ENCODE measurements at regions of chr11 and their contacts with region 1.

Region 1: DNA sequence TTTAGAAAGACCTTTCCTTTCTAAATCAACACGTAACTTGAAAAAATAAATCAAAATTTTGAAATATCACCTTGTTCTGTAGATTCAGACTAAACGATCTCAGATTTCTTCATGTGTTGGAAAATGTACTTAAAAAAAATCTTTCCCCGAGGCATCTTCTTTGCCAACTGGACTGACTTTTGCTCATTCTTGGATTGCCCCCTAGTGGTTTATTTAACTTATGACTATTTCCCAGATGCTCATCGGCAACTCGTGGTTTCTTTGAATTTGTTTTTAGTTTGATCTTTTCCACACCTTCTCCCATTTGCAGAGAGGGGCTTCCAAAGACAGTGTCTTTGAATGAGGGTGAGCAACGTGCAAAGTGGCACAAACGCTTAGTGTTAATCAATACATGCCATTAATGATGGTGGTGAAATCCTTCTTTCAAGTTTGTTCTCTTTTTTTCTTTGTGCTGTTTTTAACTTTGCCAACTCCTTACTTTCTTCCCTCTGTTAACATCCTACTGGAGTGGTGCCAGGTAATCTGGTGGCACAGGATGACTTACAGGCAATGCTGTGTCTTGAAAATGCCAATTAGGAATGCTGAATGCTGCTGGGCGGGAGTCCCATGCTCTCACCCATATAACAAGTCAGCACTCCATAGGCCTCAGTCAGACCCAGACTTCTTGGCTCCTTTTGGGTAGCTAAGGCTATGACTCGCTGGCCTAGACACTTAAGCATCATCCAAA is 18.3 kb downstream of the PRSS23 start:
- ATAC-seq: peak in 7 of 8 experiments; percentile 44 to 77 (median 55)
- H3K4me3 ChIP-seq: no peak overlapping the region
- H3K27ac ChIP-seq: no peak overlapping the region
- H3K4me1 ChIP-seq: no peaks in the 10 kb centered on the region

Region 2: GRCh38 chr11:85444479-85444878 is 1374.2 kb before region 1 on chr11:
- in situ Hi-C with region 1: no loop called
- ATAC-seq: no peak
- H3K4me3 ChIP-seq: no peak overlapping the region
- H3K27ac ChIP-seq: no peak overlapping the region
- H3K4me1 ChIP-seq: no peaks in the 10 kb centered on the region

Region 3: DNA sequence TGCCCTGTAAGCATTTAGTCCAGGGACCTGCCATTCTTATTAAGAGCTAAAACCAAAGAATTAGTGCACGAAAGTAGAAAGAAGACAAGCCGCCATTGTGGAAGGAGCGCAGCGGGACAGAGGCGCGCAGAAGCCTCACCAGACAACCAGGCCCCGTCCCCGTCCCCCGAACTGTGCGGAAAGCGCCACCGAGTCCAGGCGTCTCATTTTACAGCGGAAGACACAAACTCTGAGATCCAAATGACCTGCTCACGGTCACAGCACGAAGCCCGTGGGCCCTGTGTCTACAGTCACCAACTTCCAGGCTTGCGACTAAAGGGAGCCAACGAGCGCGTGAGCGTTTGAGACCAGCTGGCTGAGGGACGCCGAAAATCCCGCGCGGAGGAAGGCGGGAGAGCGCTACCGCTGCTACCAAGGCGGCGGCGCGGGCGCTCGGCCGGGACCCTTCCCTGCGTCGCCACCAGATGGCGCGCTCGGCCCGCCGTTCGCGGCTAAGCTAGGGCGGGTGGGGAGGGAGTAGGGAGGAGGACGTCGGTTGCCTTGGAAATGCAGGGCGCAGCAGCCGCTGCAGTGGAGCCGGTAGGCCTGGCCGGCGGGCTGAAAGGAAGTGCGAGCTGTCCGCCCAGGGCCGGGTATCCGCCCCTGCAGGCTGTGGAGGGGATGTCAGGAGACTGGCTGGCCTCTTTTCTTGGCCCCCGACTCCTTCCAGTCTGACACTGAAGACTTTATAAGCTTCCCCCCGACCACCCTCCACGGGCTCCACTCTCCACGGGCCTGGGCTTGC is 963.9 kb before region 1 on chr11:
- in situ Hi-C with region 1: loop called in 1 of 9 experiments (anchors 25 kb)
- ATAC-seq: peak; percentile 98 to 99 (median 98)
- H3K4me3 ChIP-seq: peak overlapping the region; percentile 35 to 44 (median 40)
- H3K27ac ChIP-seq: peak overlapping the region in 1 of 2 donors; percentile 35
- H3K4me1 ChIP-seq: peaks cover 2% of the 10 kb centered on the region in 2 donors

Region 4: DNA sequence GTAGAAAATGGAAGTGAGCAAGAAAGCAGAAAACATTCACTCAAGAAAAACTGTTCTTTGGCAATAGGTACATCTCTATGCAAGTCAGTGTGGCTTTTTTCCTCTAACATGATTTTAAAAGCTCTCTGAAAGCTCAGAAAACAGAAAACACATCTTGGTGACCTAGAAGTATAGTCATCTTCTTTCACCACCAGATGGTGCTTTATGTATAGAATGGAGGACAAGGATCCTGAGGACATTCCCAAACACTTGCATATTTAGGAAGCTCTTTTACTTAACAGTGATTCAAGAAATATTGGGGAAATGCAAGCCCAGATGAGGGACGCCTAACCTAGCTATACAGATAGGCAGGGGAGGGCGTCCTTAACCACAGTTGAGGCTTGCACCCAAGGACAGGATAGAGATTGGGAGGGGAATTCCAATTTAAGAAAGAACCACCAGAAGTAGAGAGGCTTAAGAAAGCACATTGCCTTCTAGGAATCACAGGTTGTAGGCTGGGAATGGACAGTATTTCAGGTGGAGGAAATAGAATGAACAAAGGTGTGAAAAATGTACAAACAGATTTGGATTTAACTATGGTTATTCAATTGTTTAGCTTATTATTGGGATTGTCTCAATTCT is 457.7 kb before region 1 on chr11:
- in situ Hi-C with region 1: loop called in 1 of 9 experiments (anchors 25 kb)
- ATAC-seq: peak in 4 of 8 experiments; percentile 28 to 89 (median 76)
- H3K4me3 ChIP-seq: no peak overlapping the region
- H3K27ac ChIP-seq: no peak overlapping the region
- H3K4me1 ChIP-seq: peaks cover 8 to 13% of the 10 kb centered on the region in 2 donors

Region 5: DNA sequence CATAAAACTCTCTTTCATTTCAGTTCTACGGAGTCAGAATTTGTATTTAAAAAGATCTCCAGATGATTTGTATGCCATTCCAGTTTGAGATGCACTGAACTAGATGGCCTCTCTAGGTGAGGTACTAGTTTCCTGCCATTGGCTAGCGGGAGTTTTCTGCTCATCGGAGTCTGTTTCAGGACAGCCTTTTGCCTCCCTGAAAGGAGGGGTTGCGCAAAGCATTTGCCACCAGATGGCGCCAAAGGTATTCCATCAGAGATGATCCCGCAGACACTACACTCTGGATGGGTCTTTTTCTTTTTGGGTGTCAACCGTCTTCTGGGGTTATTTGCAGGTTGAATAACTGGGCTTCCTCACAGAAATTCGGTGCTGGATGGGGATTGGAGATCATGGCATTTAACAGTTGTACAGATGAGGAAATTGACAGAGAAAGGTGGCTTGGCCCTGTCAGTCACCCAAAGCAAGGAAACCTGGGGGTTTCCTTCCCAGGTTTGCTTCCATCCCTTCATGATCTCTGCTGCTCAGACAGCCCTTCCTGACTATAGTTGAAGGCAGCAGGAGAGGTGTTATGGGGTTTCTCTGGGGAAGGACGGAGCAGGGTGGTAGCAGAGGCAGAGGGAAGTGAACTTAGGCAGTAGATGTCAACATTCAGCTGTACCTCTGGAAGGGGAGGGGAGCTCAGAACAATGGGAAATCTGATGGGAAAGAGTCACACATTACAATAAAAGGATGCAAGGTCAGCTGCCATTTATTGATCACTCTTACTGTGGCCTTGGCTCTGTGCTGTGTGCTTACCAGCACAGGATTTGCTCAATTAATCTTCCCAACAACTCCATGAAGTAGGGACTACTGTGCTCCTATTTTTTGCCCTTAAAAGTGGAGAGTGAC is 362.3 kb before region 1 on chr11:
- in situ Hi-C with region 1: loop called in 8 of 9 experiments (anchors 10 to 25 kb)
- ATAC-seq: peak; percentile 80 to 97 (median 96)
- H3K4me3 ChIP-seq: no peak overlapping the region
- H3K27ac ChIP-seq: no peak overlapping the region
- H3K4me1 ChIP-seq: peaks cover 3 to 12% of the 10 kb centered on the region in 2 donors

Region 6: DNA sequence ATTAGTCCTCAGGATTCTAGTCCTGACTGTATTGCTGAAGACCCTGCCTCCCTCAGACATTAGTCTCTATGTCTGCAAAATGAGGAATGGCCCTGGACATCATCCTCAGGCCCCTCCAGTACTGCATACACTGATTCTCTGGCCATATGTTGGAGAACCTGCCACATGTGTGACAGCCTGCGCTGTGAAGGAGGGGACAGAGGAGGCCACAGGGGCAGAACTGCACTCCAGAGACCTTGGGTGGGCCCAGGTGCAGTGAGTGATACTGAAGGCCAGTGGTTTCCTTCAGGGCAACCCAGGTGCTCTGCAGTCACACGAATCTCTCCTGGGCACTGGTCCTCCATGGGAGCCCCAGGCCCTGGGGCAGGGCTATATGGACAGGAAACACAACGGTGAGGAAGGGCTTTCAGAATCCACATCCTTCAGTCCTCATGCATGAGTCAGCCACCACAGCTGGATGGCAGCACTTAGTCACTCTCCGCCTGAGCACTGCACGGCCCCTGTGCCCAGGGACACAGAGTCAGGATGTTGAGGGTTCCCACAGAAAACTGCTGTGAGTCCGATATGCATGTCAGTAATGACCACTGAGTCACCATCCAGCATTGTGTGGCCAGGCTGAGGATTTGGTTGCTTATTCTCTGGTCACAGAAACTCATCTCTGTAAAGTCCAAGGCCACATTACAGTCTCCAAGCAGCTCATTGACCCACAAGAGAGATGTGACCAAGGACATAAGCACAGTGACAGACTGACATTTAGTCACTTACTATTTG is 185.9 kb before region 1 on chr11:
- in situ Hi-C with region 1: loop called in 1 of 9 experiments (anchors 25 kb)
- ATAC-seq: peak; percentile 66 to 92 (median 76)
- H3K4me3 ChIP-seq: no peak overlapping the region
- H3K27ac ChIP-seq: no peak overlapping the region
- H3K4me1 ChIP-seq: no peaks in the 10 kb centered on the region

Region 7: DNA sequence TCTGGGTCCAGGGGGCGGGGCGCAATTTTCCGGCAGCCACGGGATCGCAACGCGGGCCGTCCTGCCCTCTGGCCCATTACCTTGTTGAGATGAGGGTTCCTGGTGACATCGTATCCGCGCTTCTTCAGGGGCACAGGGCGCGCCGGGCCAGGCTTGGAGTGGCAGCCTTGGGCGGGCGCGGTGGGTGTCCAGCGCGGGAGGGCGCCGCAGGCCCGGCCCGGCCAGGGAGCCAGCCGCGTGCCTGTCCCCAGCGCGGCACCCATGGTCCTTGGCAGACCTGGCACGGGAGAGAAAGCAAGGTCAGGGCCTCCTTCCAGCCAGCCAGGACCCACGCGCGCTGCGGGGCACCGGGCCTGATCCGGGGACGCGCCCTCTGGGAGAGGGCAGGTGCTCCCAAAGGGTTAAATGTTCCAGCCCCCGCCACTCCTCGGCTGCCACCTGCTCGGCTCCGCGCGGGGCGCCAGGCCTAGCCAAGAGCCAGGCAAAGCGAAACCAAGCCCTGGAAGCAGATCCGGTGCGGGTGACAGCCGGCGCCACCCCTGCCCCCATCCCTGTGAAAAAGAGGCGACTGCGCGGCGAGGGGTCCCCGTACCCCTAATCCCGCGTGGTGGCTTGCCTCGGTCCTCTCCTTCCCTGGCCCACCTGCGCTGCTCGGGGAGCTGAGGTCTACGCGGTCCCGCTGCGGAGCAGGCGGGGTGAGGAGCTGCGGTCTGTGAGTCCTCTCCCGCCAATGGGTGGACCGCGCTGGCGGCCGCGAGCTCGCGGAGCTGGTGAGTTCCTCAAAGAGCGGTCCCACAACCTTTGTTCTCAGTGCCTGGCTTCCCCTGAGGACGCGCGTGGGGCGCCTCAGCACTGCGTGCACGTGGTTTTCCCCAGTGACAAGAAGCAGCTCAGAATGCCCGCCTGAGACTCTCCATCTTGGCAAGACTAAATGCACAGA is 146.7 kb before region 1 on chr11 and contains the start of gene ME3:
- in situ Hi-C with region 1: loop called in 2 of 9 experiments (anchors 25 kb)
- ATAC-seq: peak; percentile 66 to 89 (median 82)
- H3K4me3 ChIP-seq: peak within 1 kb of the TSS; percentile 25 to 42 (median 33)
- H3K27ac ChIP-seq: peak within 1 kb of the TSS in 1 of 2 donors; percentile 24
- H3K4me1 ChIP-seq: peaks cover 6 to 10% of the 10 kb centered on the region in 2 donors
- total RNA-seq, gene ME3: 3.3 to 13.0 (median 9.6) TPM

Region 8: GRCh38 chr11:86706321-86706720 is 112.3 kb before region 1 on chr11:
- in situ Hi-C with region 1: no loop called
- ATAC-seq: peak in 2 of 8 experiments; percentile 29 to 95
- H3K4me3 ChIP-seq: no peak overlapping the region
- H3K27ac ChIP-seq: no peak overlapping the region
- H3K4me1 ChIP-seq: no peaks in the 10 kb centered on the region

Measured in motor neuron (in vitro differentiated cells).